Kidney (tissue), 22 donors: ENCODE measurements at regions of chr17 and their contacts with region 1.

Region 1: DNA sequence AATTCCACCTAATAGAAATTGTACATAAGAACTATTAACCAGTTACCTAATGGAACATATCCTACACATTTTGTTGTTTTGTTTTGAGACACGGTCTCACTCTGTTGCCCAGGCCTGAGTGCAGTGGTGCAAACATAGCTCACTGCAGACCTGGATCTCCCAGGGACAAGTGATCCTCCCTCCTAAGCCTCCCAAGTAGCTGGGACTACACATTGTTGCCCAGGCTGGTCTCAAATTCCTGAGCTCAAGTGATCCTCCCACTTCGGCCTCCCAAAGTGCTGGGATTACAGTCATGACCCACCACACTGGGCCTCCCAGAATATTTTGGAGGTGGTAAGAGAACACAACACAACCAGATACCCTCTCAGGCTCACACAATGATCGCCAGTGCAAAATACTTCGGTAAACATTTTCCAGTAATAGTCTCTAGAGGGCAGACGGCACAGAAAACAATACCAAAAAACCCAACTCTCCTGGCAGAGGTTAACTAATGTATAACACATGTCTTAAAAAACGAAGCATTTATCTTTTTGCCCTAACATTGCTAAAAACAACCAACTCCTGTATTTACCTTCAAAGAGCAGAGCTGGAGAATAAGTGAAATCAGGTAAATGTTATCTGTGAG is 10.6 kb downstream of the NUFIP2 start:
- DNase-seq: no peak
- H3K4me3 ChIP-seq: no peak overlapping the region
- H3K27ac ChIP-seq: no peak overlapping the region
- H3K4me1 ChIP-seq: peaks cover 0 to 17% (median 0%) of the 10 kb centered on the region in 3 donors
- H3K27me3 ChIP-seq: no peaks in the 10 kb centered on the region
- CTCF ChIP-seq: no peak

Region 2: GRCh38 chr17:29138971-29139691 is 144.3 kb before region 1 on chr17:
- intact Hi-C with region 1: loop called (anchors 10 kb)
- DNase-seq: no peak
- H3K4me3 ChIP-seq: peak overlapping the region in 2 of 3 donors; percentile 35 to 49
- H3K27ac ChIP-seq: peak overlapping the region in 1 of 2 donors; percentile 68
- H3K4me1 ChIP-seq: peaks cover 0 to 27% (median 22%) of the 10 kb centered on the region in 3 donors
- H3K27me3 ChIP-seq: no peaks in the 10 kb centered on the region
- CTCF ChIP-seq: no peak

Region 3: GRCh38 chr17:29219378-29220047 is 63.9 kb before region 1 on chr17:
- intact Hi-C with region 1: no loop called
- DNase-seq: peak; percentile 80 to 95 (median 85)
- H3K4me3 ChIP-seq: peak overlapping the region in 1 of 3 donors; percentile 34
- H3K27ac ChIP-seq: no peak overlapping the region
- H3K4me1 ChIP-seq: peaks cover 0 to 3% (median 0%) of the 10 kb centered on the region in 3 donors
- H3K27me3 ChIP-seq: no peaks in the 10 kb centered on the region
- CTCF ChIP-seq: peak; percentile 86

Region 4: GRCh38 chr17:29241015-29241963 is 42.1 kb before region 1 on chr17:
- intact Hi-C with region 1: no loop called
- DNase-seq: peak in 1 of 5 donors; percentile 2
- H3K4me3 ChIP-seq: no peak overlapping the region
- H3K27ac ChIP-seq: no peak overlapping the region
- H3K4me1 ChIP-seq: no peaks in the 10 kb centered on the region
- H3K27me3 ChIP-seq: no peaks in the 10 kb centered on the region
- CTCF ChIP-seq: no peak